ENCODE measurements at regions of chr7 and their contacts with region 1.

Region 1: DNA sequence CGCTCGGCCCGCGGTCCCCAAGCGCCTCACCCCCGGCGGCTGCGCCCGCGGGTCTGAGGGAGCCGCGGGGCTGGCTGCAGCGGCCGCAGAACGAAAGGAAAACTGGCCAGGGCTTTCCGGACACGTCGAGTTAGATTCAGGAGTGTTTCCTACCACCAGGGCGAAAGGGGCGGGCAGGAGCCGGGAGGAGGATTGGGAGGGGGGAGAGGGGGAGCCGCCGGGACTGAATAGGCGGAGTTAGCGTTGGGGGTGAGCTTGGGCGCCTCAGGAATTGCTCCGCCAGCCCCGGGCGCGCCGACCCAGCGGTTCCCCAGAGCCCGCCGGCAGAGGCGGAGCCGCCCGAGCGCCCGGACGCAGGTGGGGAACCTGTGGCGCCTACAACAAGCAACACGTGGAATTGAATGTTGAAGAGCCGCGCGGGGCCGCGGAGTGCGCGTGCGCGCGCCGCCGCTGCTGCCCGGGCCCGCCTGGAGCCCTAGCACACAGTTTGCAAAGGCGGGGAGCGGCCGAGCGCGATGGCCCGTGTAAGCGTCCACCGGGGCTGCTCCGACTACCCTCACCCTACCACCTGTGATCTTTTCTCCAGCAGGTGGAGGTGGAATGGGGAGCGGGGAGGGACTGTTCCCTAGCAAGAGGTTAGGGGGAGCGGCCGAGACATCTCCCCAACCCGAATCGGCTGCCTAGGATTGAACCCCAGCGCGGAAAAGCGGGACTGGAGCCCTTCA is at the start of gene CADPS2:
- DNase-seq: peak; percentile 86 to 94
- ATAC-seq: peak; percentile 92
- H3K4me3 ChIP-seq: peak within 1 kb of the TSS; percentile 56 to 83
- H3K27ac ChIP-seq: peak within 1 kb of the TSS; percentile 14 to 81
- H3K4me1 ChIP-seq: no peaks in the 10 kb centered on the region
- H3K27me3 ChIP-seq: no peaks in the 10 kb centered on the region
- total RNA-seq, gene CADPS2: 15.2 to 23.8 TPM

Region 2: GRCh38 chr7:122143751-122144711 is 742.5 kb before region 1 on chr7 and contains the start of gene AASS:
- intact Hi-C with region 1: loop called in 1 of 2 experiments (anchors 10 kb)
- DNase-seq: peak; percentile 98 to 99
- ATAC-seq: peak; percentile 98
- H3K4me3 ChIP-seq: peak within 1 kb of the TSS; percentile 47 to 75
- H3K27ac ChIP-seq: peak within 1 kb of the TSS; percentile 87 to 97
- H3K4me1 ChIP-seq: peaks cover 0 to 3% of the 10 kb centered on the region in 2 donors
- H3K27me3 ChIP-seq: no peaks in the 10 kb centered on the region
- total RNA-seq, gene AASS: 34.2 to 42.4 TPM

Measured in aorta (tissue), 5 donors.